Calu3 (cell line): ENCODE measurements at regions of chr6 and their contacts with region 1.

Region 1: DNA sequence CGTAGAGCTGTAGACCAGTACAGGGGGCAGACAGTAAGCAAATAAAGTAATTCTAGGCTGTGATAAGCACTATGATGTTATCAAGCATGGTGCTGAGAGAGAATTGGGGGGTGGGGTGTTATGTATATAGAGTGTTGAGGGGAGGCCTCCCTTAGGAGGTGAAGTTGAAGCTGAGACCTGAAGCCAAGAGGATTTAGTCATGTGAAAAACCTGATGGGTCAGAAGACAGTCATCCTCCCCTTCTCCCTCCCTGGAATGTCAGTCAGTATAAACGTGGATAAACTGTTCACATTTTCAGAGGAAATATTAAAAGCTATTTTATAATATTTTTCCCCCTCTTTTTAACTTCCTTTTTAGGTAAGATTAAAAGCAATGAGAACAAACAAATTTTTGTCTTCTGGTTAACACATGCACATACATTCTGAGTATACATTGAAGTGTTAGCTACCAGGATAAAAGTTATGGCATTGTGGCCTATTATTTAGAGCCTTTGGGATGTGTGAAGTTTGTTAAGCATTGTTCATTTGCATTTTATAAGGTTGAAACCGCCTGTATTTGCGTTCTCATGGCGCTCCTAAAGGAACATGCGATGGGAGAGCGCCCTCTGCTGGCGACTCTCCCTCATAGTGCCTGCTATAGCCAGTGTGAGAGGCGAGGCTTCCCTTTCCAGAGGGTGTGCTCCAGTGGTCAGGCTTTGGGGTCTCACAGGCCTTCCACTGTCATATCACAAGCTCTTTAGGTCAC is 35.4 kb upstream of the MAPK13 start:
- DNase-seq: peak; percentile 87
- H3K4me3 Mint-ChIP-seq: no peak overlapping the region
- H3K27ac Mint-ChIP-seq: peak overlapping the region; percentile 89
- H3K4me1 Mint-ChIP-seq: peaks cover 27% of the 10 kb centered on the region
- H3K27me3 Mint-ChIP-seq: no peaks in the 10 kb centered on the region
- CTCF ChIP-seq: peak; percentile 96

Region 2: GRCh38 chr6:35973670-35974222 is 121.2 kb before region 1 on chr6:
- CTCF ChIA-PET with region 1: interaction called, 3 read pairs
- intact Hi-C with region 1: loop called (anchors 5 kb)
- DNase-seq: peak; percentile 54
- H3K4me3 Mint-ChIP-seq: no peak overlapping the region
- H3K27ac Mint-ChIP-seq: peak overlapping the region; percentile 84
- H3K4me1 Mint-ChIP-seq: peaks cover 31% of the 10 kb centered on the region
- H3K27me3 Mint-ChIP-seq: no peaks in the 10 kb centered on the region
- CTCF ChIP-seq: no peak